ENCODE measurements at regions of chr2 and their contacts with region 1.

Region 1: GRCh38 chr2:85888684-85889626 is at the start of gene ST3GAL5:
- DNase-seq: peak; percentile 92 to 96
- ATAC-seq: peak; percentile 81 to 94 (median 90)
- H3K4me3 ChIP-seq: peak within 1 kb of the TSS; percentile 90
- H3K4me3 Mint-ChIP-seq: peak within 1 kb of the TSS; percentile 98
- H3K27ac ChIP-seq: peak within 1 kb of the TSS; percentile 83
- H3K27ac Mint-ChIP-seq: peak within 1 kb of the TSS; percentile 96 to 97
- H3K4me1 ChIP-seq: peaks cover 56% of the 10 kb centered on the region
- H3K4me1 Mint-ChIP-seq: peaks cover 71 to 74% of the 10 kb centered on the region in 2 donors
- H3K27me3 ChIP-seq: no peaks in the 10 kb centered on the region
- H3K27me3 Mint-ChIP-seq: no peaks in the 10 kb centered on the region
- CTCF ChIP-seq: peak; percentile 83
- total RNA-seq, gene ST3GAL5: 54.6 to 72.4 (median 66.1) TPM

Region 2: GRCh38 chr2:85619617-85620016 is 269.3 kb before region 1 on chr2:
- intact Hi-C with region 1: no loop called
- DNase-seq: no peak
- ATAC-seq: no peak
- H3K4me3 ChIP-seq: no peak overlapping the region
- H3K4me3 Mint-ChIP-seq: no peak overlapping the region
- H3K27ac ChIP-seq: no peak overlapping the region
- H3K27ac Mint-ChIP-seq: no peak overlapping the region
- H3K4me1 ChIP-seq: peaks cover 24% of the 10 kb centered on the region
- H3K4me1 Mint-ChIP-seq: peaks cover 18 to 22% of the 10 kb centered on the region in 2 donors
- H3K27me3 ChIP-seq: no peaks in the 10 kb centered on the region
- H3K27me3 Mint-ChIP-seq: no peaks in the 10 kb centered on the region
- CTCF ChIP-seq: no peak

Region 3: DNA sequence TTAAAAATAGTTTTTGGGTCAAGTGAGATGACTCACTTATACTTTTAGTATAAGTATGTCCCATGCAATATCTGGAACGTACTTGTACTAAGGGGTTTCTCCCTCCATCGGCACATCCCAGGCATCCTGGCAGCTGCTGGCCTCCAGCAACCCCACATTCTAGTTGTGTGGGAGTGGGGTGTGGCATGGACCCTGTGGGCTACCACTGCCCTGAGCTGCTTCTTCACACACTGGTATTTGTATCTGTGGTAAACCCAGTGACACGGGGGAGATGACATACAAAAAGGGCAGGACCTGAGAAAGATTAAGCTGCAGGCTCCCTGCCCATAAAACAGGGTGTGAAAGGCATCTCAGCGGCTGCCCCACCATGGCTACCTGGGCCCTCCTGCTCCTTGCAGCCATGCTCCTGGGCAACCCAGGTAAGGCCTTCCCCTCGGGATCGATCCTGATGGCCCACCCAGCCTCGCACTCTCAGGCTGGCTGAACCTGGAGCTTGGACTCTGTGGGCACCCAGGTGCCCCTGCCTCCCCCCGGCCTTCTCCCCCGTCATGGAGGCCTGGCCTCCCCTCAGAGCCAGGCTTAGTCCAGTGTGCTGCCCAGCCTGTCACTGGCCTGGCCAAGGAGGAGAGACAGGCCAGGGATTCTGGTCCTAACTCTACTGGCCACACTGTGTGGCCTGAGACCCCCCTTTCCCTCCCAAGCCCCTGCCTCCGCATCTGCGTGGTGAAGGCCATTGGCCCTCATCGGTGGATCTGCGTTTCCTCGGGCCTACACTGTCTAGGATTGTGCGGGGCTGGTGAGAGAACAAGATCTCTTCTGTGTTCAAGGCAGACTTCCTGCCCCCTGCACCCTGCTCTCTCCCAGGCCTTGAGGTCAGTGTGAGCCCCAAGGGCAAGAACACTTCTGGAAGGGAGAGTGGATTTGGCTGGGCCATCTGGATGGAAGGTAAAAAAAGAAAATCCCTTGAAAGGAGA is 194.6 kb before region 1 on chr2 and contains the start of gene GNLY:
- intact Hi-C with region 1: loop called (anchors 5 kb)
- DNase-seq: peak; percentile 53 to 77
- ATAC-seq: peak; percentile 57 to 87 (median 79)
- H3K4me3 ChIP-seq: peak within 1 kb of the TSS; percentile 76
- H3K4me3 Mint-ChIP-seq: peak within 1 kb of the TSS; percentile 97
- H3K27ac ChIP-seq: peak within 1 kb of the TSS; percentile 85
- H3K27ac Mint-ChIP-seq: peak within 1 kb of the TSS; percentile 95 to 96
- H3K4me1 ChIP-seq: peaks cover 67% of the 10 kb centered on the region
- H3K4me1 Mint-ChIP-seq: peaks cover 74 to 80% of the 10 kb centered on the region in 2 donors
- H3K27me3 ChIP-seq: no peaks in the 10 kb centered on the region
- H3K27me3 Mint-ChIP-seq: no peaks in the 10 kb centered on the region
- CTCF ChIP-seq: no peak
- total RNA-seq, gene GNLY: 4,938 to 8,199 (median 6,542) TPM

Region 4: GRCh38 chr2:85826990-85827878 is 61.7 kb before region 1 on chr2:
- intact Hi-C with region 1: loop called (anchors 1 kb)
- DNase-seq: peak; percentile 83 to 90
- ATAC-seq: peak; percentile 94 to 100 (median 99)
- H3K4me3 ChIP-seq: no peak overlapping the region
- H3K4me3 Mint-ChIP-seq: no peak overlapping the region
- H3K27ac ChIP-seq: no peak overlapping the region
- H3K27ac Mint-ChIP-seq: peak overlapping the region; percentile 16 to 80
- H3K4me1 ChIP-seq: peaks cover 12% of the 10 kb centered on the region
- H3K4me1 Mint-ChIP-seq: peaks cover 14 to 21% of the 10 kb centered on the region in 2 donors
- H3K27me3 ChIP-seq: no peaks in the 10 kb centered on the region
- H3K27me3 Mint-ChIP-seq: peaks cover 0 to 6% of the 10 kb centered on the region in 2 donors
- CTCF ChIP-seq: peak; percentile 93

Region 5: DNA sequence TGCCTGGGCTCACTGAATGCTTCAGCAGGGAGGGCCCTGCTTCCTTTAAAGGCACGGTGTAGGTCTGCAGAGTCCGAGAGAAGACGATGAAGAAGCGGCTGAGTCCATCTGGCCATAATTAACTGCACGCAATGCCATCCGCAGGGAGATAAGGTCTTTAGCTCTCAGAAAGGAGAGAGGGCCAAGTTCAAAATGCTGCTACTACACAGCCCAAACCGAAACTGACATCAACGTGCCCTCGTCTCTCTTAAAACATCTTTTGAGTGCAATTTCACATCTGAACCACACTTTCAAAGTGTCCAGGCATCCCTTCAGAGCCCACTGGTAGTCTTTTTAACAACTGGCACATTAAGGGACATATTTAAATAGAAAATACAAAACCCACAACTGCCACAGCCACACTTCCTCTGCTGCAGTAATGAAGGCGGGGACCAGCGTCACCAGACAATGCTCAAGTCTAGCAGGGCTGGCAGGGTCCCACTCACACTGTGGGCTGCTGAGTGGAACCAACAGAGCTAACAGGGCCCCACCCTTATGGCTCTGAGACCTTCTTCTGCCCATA is 35.9 kb before region 1 on chr2:
- intact Hi-C with region 1: loop called (anchors 1 kb)
- DNase-seq: peak; percentile 71 to 89
- ATAC-seq: peak; percentile 81 to 92 (median 86)
- H3K4me3 ChIP-seq: peak overlapping the region; percentile 12
- H3K4me3 Mint-ChIP-seq: peak overlapping the region; percentile 91
- H3K27ac ChIP-seq: peak overlapping the region; percentile 100
- H3K27ac Mint-ChIP-seq: peak overlapping the region; percentile 94 to 99
- H3K4me1 ChIP-seq: peaks cover 61% of the 10 kb centered on the region
- H3K4me1 Mint-ChIP-seq: peaks cover 66 to 67% of the 10 kb centered on the region in 2 donors
- H3K27me3 ChIP-seq: no peaks in the 10 kb centered on the region
- H3K27me3 Mint-ChIP-seq: no peaks in the 10 kb centered on the region
- CTCF ChIP-seq: no peak

Region 6: DNA sequence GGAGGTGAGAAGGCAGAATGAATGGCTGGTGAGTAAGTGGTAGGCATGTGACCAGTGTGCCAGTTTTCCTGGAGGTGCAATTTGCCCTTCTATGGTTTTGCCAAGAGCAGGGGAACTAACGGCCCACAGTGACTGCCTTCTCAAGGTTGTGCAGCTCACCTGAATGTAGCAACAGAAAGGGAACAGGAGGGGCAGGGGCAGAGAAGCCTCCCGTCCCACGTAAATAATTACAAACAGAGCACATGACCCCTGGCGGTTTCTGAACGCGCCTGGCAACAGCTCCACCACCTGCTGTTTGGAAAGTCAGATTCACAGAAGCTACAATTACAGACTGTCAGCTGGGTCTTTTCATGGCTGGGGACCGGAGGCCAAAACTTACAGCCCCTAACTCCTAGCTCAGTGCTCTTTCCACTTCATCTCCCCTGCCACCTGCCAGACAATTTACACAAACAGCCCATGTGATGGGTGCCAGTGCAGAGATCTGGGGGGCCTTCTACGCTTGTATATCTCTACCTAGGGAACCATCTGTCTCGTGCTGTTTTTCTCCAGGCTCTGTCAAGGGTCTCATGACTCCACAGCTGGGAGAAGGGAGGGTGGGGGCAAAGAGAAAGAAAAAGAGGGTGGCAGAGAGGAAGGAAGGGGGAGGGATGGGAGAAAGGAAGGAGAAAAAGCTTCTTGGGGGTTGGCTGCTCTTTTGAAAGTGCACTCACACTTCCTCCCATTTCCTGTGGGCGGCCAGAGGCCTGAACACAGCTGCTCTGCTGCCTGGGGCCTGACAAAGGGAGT is 147.1 kb after region 1 on chr2:
- intact Hi-C with region 1: loop called (anchors 1 kb)
- DNase-seq: peak; percentile 57 to 90
- ATAC-seq: peak; percentile 33 to 55 (median 50)
- H3K4me3 ChIP-seq: peak overlapping the region; percentile 10
- H3K4me3 Mint-ChIP-seq: peak overlapping the region; percentile 92
- H3K27ac ChIP-seq: peak overlapping the region; percentile 98
- H3K27ac Mint-ChIP-seq: peak overlapping the region; percentile 98 to 99
- H3K4me1 ChIP-seq: peaks cover 68% of the 10 kb centered on the region
- H3K4me1 Mint-ChIP-seq: peaks cover 52 to 67% of the 10 kb centered on the region in 2 donors
- H3K27me3 ChIP-seq: no peaks in the 10 kb centered on the region
- H3K27me3 Mint-ChIP-seq: no peaks in the 10 kb centered on the region
- CTCF ChIP-seq: no peak

Region 7: GRCh38 chr2:86105252-86105968 is 216.5 kb after region 1 on chr2 and contains the start of gene POLR1A:
- intact Hi-C with region 1: loop called (anchors 2 kb)
- DNase-seq: peak; percentile 78 to 93
- ATAC-seq: peak; percentile 76 to 85 (median 78)
- H3K4me3 ChIP-seq: peak within 1 kb of the TSS; percentile 92
- H3K4me3 Mint-ChIP-seq: peak within 1 kb of the TSS; percentile 97
- H3K27ac ChIP-seq: peak within 1 kb of the TSS; percentile 92
- H3K27ac Mint-ChIP-seq: peak within 1 kb of the TSS; percentile 94 to 98
- H3K4me1 ChIP-seq: peaks cover 9% of the 10 kb centered on the region
- H3K4me1 Mint-ChIP-seq: peaks cover 59 to 61% of the 10 kb centered on the region in 2 donors
- H3K27me3 ChIP-seq: no peaks in the 10 kb centered on the region
- H3K27me3 Mint-ChIP-seq: no peaks in the 10 kb centered on the region
- CTCF ChIP-seq: no peak
- total RNA-seq, gene POLR1A: 19.7 to 26.5 (median 22.8) TPM

Region 8: DNA sequence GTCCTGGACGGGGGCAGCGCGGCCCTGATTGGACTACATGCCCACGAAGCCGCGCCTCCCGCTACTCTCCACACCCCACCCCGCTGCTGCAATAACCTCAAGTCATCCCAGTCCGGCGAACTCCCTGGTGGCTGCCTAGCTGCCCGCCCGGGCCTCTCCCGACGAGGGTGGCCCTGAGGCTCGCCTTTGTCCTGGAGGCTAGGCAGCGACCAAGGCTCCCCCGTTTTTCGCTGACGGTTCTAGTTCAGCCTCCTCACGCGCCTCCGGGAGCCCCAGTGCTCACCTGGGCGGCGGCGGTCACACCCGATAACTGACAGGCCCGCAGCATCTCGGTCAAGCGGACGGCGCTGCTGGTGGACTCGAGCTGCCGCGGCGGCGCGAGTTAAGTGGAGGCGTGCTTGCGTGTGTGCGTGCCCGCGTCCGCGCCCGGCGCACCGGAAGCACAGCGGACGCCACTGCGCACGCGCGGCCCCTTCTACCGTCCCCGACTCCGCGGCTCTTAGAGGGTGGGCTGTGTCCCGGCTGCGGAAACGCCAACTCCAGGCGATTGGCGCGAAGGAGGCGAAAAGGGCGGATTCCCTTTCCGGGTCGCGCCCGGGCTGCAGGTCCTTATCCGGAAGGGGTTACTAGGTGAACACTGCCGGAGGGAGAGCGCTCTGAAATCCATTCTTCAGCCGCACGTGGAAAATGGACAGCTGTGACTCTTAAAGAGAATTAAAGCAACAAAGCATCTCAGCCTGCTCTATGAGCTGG is 306.3 kb after region 1 on chr2 and contains the start of gene IMMT:
- intact Hi-C with region 1: loop called (anchors 10 kb)
- DNase-seq: peak; percentile 86 to 97
- ATAC-seq: peak; percentile 88 to 97 (median 91)
- H3K4me3 ChIP-seq: peak within 1 kb of the TSS; percentile 99
- H3K4me3 Mint-ChIP-seq: peak within 1 kb of the TSS; percentile 97
- H3K27ac ChIP-seq: peak within 1 kb of the TSS; percentile 98
- H3K27ac Mint-ChIP-seq: peak within 1 kb of the TSS; percentile 97
- H3K4me1 ChIP-seq: peaks cover 27% of the 10 kb centered on the region
- H3K4me1 Mint-ChIP-seq: peaks cover 54 to 61% of the 10 kb centered on the region in 2 donors
- H3K27me3 ChIP-seq: no peaks in the 10 kb centered on the region
- H3K27me3 Mint-ChIP-seq: no peaks in the 10 kb centered on the region
- CTCF ChIP-seq: no peak
- total RNA-seq, gene IMMT: 54.5 to 62.6 (median 59.0) TPM

Region 9: DNA sequence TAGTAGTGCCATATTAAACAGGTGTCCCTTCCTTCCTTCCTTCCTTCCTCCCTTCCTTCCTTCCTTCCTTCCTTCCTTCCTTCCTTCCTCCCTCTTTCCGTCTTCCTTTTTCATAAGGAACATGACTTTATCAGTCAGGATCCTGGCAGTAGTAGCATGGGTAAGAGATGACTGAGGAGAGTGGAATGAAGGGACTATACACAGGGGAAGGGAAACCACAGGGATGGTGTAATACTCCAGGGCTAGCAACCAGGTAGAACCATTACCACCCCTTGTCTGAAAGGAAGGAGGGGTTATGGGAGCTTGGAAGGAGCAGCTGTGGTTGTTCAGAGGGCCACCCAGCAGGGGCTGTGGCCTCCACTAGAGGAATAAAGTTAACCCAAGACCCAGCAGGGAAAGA is 529.0 kb after region 1 on chr2:
- intact Hi-C with region 1: no loop called
- DNase-seq: no peak
- ATAC-seq: no peak
- H3K4me3 ChIP-seq: no peak overlapping the region
- H3K4me3 Mint-ChIP-seq: no peak overlapping the region
- H3K27ac ChIP-seq: no peak overlapping the region
- H3K27ac Mint-ChIP-seq: no peak overlapping the region
- H3K4me1 ChIP-seq: peaks cover 2% of the 10 kb centered on the region
- H3K4me1 Mint-ChIP-seq: peaks cover 0 to 7% of the 10 kb centered on the region in 2 donors
- H3K27me3 ChIP-seq: peaks cover 3% of the 10 kb centered on the region
- H3K27me3 Mint-ChIP-seq: peaks cover 43 to 55% of the 10 kb centered on the region in 2 donors
- CTCF ChIP-seq: no peak